Astrocyte of the cerebellum (primary cell): ENCODE measurements at regions of chr14 and their contacts with region 1.

Region 1: GRCh38 chr14:89748004-89748403 is 206.5 kb downstream of the EFCAB11 start:
- DNase-seq: no peak
- H3K4me3 ChIP-seq: no peak overlapping the region
- CTCF ChIP-seq: no peak

Region 2: DNA sequence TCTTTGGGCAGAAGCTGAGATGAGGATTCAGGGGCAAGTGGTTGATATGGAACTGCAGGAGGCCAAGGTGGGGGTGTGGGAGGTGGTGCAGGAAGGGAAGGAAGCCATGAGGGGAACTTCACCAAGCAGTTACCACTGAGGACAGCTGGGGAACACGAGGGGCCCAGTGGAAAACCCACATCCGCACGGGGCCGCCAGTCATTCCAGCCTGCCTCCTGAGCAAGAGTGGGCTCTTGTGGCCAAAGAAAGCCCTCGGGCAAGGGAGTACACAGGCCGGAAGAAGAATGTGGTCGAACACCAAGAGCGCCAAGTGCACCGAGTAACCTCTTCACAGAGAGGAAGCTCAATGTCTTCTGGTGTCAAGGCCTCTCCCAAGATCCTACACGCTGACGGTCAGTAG is 78.8 kb before region 1 on chr14:
- in situ Hi-C with region 1: loop called (anchors 10 kb)
- DNase-seq: no peak
- H3K4me3 ChIP-seq: no peak overlapping the region
- CTCF ChIP-seq: no peak

Region 3: GRCh38 chr14:89856871-89857345 is 108.9 kb after region 1 on chr14:
- in situ Hi-C with region 1: no loop called
- DNase-seq: no peak
- H3K4me3 ChIP-seq: no peak overlapping the region
- CTCF ChIP-seq: no peak